Cardiac septum (tissue), 1 donor: ENCODE measurements at regions of chr5 and their contacts with region 1.

Region 1: GRCh38 chr5:163564321-163564938 is 59.0 kb downstream of the MAT2B start:
- DNase-seq: no peak

Region 2: GRCh38 chr5:163330723-163331668 is 233.4 kb before region 1 on chr5:
- intact Hi-C with region 1: no loop called
- DNase-seq: no peak

Region 3: GRCh38 chr5:163437309-163438182 is 126.9 kb before region 1 on chr5 and contains the start of gene CCNG1:
- intact Hi-C with region 1: no loop called
- DNase-seq: peak; percentile 97
- total RNA-seq, gene CCNG1: 62.6 TPM

Region 4: GRCh38 chr5:163505368-163506094 is 58.9 kb before region 1 on chr5 and contains the start of gene MAT2B:
- intact Hi-C with region 1: no loop called
- DNase-seq: peak; percentile 99
- total RNA-seq, gene MAT2B: 45.2 TPM

Region 5: DNA sequence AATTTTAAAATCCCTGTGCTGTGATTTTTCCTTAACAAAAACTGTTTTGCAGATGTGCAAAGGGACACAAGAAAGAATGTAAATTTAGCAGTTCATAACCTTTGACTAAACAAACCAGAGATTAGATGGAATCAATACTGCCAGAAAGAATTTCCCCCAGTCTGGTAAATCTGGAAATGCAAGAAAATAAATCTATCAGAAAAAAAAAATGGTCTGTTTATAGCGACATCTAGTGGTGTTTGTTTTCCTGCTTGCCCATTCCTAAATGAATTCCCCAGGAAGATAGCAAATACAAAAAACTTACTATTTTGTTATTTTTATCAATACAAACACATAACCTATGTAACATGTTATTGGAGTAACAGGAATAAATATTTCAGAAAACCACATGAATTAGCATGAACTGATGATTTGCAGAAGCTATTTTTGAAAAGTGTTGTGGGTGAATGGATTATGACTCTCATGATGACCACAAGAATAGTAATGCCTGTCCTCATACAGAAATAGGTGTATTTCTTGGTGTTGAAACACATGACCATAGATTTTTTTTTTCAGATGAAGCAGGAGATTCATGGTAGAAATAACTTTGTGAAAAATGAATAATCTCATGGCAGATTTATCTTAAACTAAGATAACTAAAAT is 1644.8 kb after region 1 on chr5:
- intact Hi-C with region 1: loop called (anchors 10 kb)
- DNase-seq: no peak